ENCODE measurements at regions of chr15 and their contacts with region 1.

Region 1: DNA sequence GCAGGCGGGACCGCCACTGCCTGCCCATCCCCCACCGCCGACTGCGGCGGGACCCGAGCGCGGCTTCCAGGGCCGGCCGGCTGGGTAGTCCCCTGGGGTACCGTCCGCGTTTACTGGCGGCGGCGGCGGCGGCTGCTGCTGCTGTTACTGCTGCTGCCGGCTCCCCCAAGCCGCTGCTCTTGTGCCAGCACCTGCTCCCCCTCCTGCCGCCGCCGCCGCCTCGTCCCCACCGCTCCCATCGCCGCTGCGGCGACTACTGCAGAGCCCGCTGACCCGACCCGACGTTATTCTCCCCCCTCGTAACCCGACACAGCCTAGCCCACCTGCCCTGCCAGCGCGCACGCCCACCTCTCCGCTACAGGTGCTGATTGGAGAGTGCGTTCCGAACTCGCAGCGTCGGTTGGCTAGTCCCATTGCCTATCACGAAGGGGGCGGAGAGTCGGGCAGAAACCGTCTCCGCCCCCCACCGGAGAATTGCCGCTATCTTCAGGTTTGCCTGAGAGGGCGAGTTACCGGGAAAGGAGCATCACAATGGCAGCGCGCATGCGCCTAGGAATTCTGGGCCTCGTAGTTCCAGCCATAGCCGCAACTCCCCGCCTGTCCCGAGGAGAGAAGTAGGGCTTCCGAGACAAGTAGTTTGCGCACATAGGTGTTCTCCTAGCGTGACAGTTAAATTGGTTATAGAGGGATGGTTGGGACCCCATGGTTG is at the start of gene TTBK2:
- DNase-seq: peak; percentile 98
- H3K4me3 Mint-ChIP-seq: peak within 1 kb of the TSS; percentile 95
- H3K27ac Mint-ChIP-seq: peak within 1 kb of the TSS; percentile 87
- H3K4me1 Mint-ChIP-seq: peaks cover 26% of the 10 kb centered on the region
- H3K27me3 Mint-ChIP-seq: no peaks in the 10 kb centered on the region

Region 2: GRCh38 chr15:42704492-42704926 is 216.2 kb before region 1 on chr15:
- CTCF ChIA-PET with region 1: interaction called, 37 read pairs
- DNase-seq: peak; percentile 78
- H3K4me3 Mint-ChIP-seq: no peak overlapping the region
- H3K27ac Mint-ChIP-seq: no peak overlapping the region
- H3K4me1 Mint-ChIP-seq: peaks cover 5% of the 10 kb centered on the region
- H3K27me3 Mint-ChIP-seq: no peaks in the 10 kb centered on the region

Region 3: DNA sequence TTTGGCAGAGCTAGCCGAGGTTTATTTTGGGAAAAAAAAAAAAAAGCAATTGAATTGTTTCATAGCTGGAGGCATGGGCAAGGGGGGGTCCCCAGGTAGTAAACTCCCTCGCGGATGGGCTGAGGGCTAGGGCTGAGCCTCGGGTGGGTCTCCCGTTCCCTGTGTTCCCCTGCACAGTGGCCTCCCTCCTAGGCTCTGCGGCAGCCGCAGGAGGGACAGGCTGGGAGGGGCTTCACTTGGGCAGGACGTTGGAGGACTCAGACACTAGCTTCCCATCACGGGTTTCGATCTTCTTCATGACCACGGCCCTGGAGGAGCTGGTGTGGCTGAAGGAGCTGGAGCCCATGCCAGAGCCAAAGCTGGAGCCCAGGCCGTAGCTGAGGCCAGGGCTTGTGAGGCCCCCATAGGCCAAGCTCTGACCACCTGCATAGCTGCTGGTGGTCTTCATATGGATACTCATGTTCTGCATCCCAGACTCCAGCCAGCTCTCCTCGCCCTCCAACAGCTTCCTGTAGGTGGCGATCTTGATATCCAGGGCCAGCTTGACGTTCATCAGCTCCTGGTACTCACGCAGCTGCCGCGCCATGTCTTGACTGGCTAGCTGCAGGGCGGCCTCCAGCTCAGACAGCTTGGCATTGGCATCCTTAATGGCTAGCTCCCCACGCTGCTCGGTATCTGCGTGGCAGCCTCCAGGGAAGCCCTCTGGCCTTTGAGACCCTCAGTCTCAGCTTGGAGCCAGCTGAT is 119.8 kb before region 1 on chr15:
- CTCF ChIA-PET with region 1: interaction called, 12 read pairs
- DNase-seq: no peak
- H3K4me3 Mint-ChIP-seq: no peak overlapping the region
- H3K27ac Mint-ChIP-seq: no peak overlapping the region
- H3K4me1 Mint-ChIP-seq: peaks cover 14% of the 10 kb centered on the region
- H3K27me3 Mint-ChIP-seq: no peaks in the 10 kb centered on the region

Measured in activated naive CD4-positive, alpha-beta T cell treated with anti-CD3 and anti-CD28 coated beads, Interleukin-2, amount 10 ng/mL, durations not matched to agents 7 days and 5 days (primary cell).